Activated CD4-positive, alpha-beta memory T cell treated with anti-CD3 and anti-CD28 coated beads for 36 hours (primary cell): ENCODE measurements at regions of chr4 and their contacts with region 1.

Region 1: DNA sequence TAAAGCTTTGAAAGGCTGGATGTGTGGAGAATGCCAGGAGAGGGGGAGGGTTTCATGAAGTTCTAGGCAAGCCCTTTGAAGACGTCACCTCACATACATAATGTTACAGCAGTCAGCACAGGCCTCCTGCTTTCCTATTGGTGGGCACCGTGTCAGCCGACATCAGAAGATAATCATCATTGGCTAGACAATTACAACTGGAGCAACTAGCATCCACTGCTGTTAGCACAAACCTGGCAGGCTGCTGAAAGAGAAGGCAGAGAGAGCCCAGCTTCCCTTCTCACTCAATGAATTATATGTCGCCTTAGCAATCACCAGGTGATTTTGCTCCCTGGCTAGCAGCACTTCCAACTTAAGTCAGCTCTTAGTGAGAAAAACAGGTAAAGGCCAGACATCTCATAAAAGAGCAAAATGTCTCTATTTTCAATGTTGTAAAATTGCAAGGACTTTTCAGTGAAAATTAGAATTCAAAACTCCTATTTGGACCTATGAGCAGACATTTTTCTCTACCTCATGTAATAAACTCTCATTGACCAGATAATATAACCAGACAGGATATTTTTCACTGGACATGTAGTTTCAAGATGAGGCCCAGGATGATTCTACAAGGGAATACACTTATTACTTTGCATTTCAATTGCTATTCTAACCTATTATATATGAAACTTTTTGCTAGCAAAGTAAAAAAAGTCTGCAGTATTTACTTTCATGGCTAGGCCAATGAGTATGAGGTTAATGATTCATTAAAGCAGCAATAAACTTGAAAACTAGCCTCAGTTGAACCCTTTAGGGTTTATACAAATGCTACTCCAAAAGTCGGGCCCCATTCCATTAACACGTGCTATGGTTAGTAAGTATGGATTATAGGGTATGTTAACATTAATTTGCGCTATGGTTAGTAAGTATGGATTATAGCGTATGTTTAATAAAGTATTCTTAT is 4.3 kb downstream of the ELOVL6 start:
- DNase-seq: peak; percentile 89
- H3K4me3 Mint-ChIP-seq: peak overlapping the region; percentile 59
- H3K27ac Mint-ChIP-seq: peak overlapping the region; percentile 93
- H3K4me1 Mint-ChIP-seq: peaks cover 20% of the 10 kb centered on the region
- H3K27me3 Mint-ChIP-seq: no peaks in the 10 kb centered on the region

Region 2: DNA sequence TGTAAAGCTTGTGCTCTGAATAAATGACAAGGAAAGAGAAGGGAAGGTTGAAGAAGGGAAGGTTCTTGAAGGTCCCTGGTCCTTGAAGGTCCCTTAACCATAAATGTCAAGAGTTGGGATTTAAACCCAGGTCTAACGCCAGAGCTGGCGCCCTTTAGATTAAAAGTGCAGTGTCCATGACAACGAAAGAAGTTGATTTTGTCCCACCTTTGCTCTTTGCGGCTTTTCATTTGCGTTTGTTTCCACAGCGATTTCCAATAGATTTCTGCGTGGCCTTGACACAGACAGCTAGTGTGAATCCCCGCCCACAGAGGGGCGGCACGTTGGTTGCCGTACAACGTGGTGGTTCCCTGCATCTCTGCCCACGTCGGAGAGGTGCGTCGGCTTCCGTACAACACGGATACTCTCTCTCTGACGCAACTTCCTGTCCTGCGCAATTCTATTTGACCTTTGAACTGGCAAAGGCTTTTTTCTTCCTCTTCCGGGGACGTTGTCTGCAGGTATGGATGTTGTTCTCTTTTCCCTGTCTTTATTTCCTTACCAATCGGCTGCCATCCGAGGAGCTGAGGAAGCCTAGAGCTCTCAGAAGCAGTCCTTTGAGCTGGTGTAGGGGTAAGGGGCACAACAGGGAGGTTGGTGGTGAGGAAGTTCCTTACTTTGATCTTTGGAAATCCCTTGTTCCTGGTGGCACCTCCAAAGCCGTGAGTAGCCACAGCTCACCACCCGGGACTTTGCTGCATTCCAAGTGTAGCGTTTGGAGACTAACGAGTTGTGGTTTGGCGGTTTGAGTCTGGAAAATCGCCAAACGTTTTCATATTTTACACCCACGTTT is 1573.8 kb before region 1 on chr4 and contains the start of gene RPL34:
- CTCF ChIA-PET with region 1: no interaction called
- POLR2A ChIA-PET with region 1: no interaction called
- intact Hi-C with region 1: loop called (anchors 2 kb)
- DNase-seq: peak; percentile 97
- H3K4me3 Mint-ChIP-seq: peak within 1 kb of the TSS; percentile 88
- H3K27ac Mint-ChIP-seq: peak within 1 kb of the TSS; percentile 95
- H3K4me1 Mint-ChIP-seq: peaks cover 48% of the 10 kb centered on the region
- H3K27me3 Mint-ChIP-seq: no peaks in the 10 kb centered on the region
- total RNA-seq, gene RPL34: 1,653 to 1,658 TPM

Region 3: GRCh38 chr4:110055158-110055768 is 138.8 kb before region 1 on chr4:
- CTCF ChIA-PET with region 1: interaction called, 4 read pairs
- POLR2A ChIA-PET with region 1: interaction called, 4 read pairs
- intact Hi-C with region 1: loop called (anchors 1 kb)
- DNase-seq: peak; percentile 34
- H3K4me3 Mint-ChIP-seq: no peak overlapping the region
- H3K27ac Mint-ChIP-seq: peak overlapping the region; percentile 34
- H3K4me1 Mint-ChIP-seq: peaks cover 26% of the 10 kb centered on the region
- H3K27me3 Mint-ChIP-seq: no peaks in the 10 kb centered on the region

Region 4: GRCh38 chr4:110088670-110089069 is 105.4 kb before region 1 on chr4:
- CTCF ChIA-PET with region 1: no interaction called
- POLR2A ChIA-PET with region 1: interaction called, 6 read pairs
- intact Hi-C with region 1: loop called (anchors 1 kb)
- DNase-seq: peak; percentile 43
- H3K4me3 Mint-ChIP-seq: no peak overlapping the region
- H3K27ac Mint-ChIP-seq: peak overlapping the region; percentile 47
- H3K4me1 Mint-ChIP-seq: peaks cover 57% of the 10 kb centered on the region
- H3K27me3 Mint-ChIP-seq: no peaks in the 10 kb centered on the region

Region 5: GRCh38 chr4:110165382-110166285 is 28.5 kb before region 1 on chr4:
- CTCF ChIA-PET with region 1: interaction called, 9 read pairs
- POLR2A ChIA-PET with region 1: interaction called, 23 read pairs
- intact Hi-C with region 1: loop called (anchors 1 kb)
- DNase-seq: peak; percentile 81
- H3K4me3 Mint-ChIP-seq: peak overlapping the region; percentile 33
- H3K27ac Mint-ChIP-seq: peak overlapping the region; percentile 93
- H3K4me1 Mint-ChIP-seq: peaks cover 30% of the 10 kb centered on the region
- H3K27me3 Mint-ChIP-seq: no peaks in the 10 kb centered on the region

Region 6: DNA sequence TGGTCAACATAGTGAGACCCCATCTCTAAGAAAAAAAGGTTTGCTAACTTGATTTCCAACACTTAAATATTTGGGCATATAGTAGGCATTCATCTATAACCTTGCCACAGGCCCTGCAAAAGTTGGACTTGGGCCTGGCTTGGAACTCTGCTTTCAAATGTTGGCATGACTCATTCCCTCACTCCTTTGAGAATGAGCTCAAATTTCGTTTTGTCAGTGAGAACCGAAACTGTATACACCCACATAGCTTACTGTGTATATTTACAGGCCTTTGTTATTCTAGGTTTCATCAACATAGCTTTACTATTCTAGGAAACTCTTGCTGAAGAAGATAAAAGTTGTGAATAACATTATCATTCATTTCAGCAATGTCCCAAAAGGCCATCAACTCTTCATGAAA is 93.0 kb after region 1 on chr4:
- CTCF ChIA-PET with region 1: no interaction called
- POLR2A ChIA-PET with region 1: no interaction called
- intact Hi-C with region 1: loop called (anchors 5 kb)
- DNase-seq: peak; percentile 30
- H3K4me3 Mint-ChIP-seq: no peak overlapping the region
- H3K27ac Mint-ChIP-seq: no peak overlapping the region
- H3K4me1 Mint-ChIP-seq: peaks cover 6% of the 10 kb centered on the region
- H3K27me3 Mint-ChIP-seq: peaks cover 30% of the 10 kb centered on the region

Region 7: GRCh38 chr4:110516106-110516922 is 322.2 kb after region 1 on chr4:
- CTCF ChIA-PET with region 1: no interaction called
- POLR2A ChIA-PET with region 1: no interaction called
- intact Hi-C with region 1: loop called (anchors 5 kb)
- DNase-seq: peak; percentile 78
- H3K4me3 Mint-ChIP-seq: peak overlapping the region; percentile 91
- H3K27ac Mint-ChIP-seq: peak overlapping the region; percentile 74
- H3K4me1 Mint-ChIP-seq: peaks cover 12% of the 10 kb centered on the region
- H3K27me3 Mint-ChIP-seq: peaks cover 2% of the 10 kb centered on the region